ENCODE measurements at regions of chr16 and their contacts with region 1.

Region 1: GRCh38 chr16:35485915-35486314 is 2026.5 kb downstream of the TP53TG3F start:
- DNase-seq: no peak
- H3K4me3 ChIP-seq: no peak overlapping the region
- H3K27ac ChIP-seq: no peak overlapping the region
- H3K4me1 ChIP-seq: no peaks in the 10 kb centered on the region
- H3K27me3 ChIP-seq: no peaks in the 10 kb centered on the region
- CTCF ChIP-seq: no peak
- POLR2A ChIP-seq: no peak

Region 2: GRCh38 chr16:35364263-35364662 is 121.7 kb before region 1 on chr16:
- intact Hi-C with region 1: no loop called
- DNase-seq: no peak
- H3K4me3 ChIP-seq: no peak overlapping the region
- H3K27ac ChIP-seq: no peak overlapping the region
- H3K4me1 ChIP-seq: no peaks in the 10 kb centered on the region
- H3K27me3 ChIP-seq: no peaks in the 10 kb centered on the region
- CTCF ChIP-seq: no peak
- POLR2A ChIP-seq: no peak

Region 3: GRCh38 chr16:35543486-35543885 is 57.6 kb after region 1 on chr16:
- intact Hi-C with region 1: loop called (anchors 10 kb)
- DNase-seq: no peak
- H3K4me3 ChIP-seq: no peak overlapping the region
- H3K27ac ChIP-seq: no peak overlapping the region
- H3K4me1 ChIP-seq: no peaks in the 10 kb centered on the region
- H3K27me3 ChIP-seq: no peaks in the 10 kb centered on the region
- CTCF ChIP-seq: no peak
- POLR2A ChIP-seq: no peak

Measured in prostate gland (tissue), 2 donors.